Motor neuron (in vitro differentiated cells): ENCODE measurements at regions of chr11 and their contacts with region 1.

Region 1: DNA sequence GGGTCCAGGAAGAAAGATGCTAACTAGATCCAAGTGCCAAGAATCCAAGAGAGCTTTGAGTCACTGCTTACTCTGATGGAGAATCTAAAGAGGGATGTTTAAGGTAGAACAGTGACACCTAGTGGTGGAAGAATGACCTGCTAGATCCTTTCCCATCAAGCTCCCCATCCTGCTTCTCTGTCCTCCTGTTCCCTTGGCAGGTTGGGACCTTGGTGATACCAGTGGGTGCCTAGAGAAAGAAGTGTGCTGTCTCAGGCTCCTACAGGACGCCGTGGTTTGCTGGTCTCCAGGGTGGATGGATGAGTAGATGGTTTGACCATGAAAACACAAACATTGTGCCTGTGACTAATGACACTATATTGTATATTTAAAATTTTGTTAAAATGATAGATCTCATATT is 383.7 kb downstream of the TMEM135 start:
- ATAC-seq: peak in 4 of 8 experiments; percentile 73 to 97 (median 94)
- H3K4me3 ChIP-seq: no peak overlapping the region
- H3K27ac ChIP-seq: no peak overlapping the region
- H3K4me1 ChIP-seq: no peaks in the 10 kb centered on the region

Region 2: DNA sequence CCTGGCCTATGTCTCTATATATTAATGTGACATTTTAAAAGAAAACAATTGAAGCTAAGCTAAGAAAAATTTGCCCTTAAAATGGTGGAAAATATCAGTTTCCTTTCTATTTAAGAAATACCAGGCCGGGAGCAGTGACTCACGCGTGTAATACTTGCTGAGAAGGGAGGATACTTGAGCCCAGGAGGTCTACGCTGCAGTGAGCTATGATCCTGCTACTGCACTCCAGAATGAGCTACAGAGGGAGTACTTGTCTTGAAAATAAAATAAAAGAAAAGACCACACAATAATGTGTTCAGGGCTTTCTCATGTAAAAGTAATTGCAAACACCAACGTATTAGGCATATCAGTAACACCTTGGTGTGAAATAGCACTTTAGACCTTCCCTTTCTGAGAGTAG is 622.4 kb before region 1 on chr11:
- in situ Hi-C with region 1: no loop called
- ATAC-seq: peak in 1 of 8 experiments; percentile 14
- H3K4me3 ChIP-seq: no peak overlapping the region
- H3K27ac ChIP-seq: no peak overlapping the region
- H3K4me1 ChIP-seq: peaks cover 23 to 31% of the 10 kb centered on the region in 2 donors

Region 3: GRCh38 chr11:86938900-86939880 is 482.2 kb before region 1 on chr11:
- in situ Hi-C with region 1: loop called in 1 of 9 experiments (anchors 25 kb)
- ATAC-seq: peak in 7 of 8 experiments; percentile 11 to 49 (median 46)
- H3K4me3 ChIP-seq: no peak overlapping the region
- H3K27ac ChIP-seq: no peak overlapping the region
- H3K4me1 ChIP-seq: peaks cover 3 to 20% of the 10 kb centered on the region in 2 donors

Region 4: DNA sequence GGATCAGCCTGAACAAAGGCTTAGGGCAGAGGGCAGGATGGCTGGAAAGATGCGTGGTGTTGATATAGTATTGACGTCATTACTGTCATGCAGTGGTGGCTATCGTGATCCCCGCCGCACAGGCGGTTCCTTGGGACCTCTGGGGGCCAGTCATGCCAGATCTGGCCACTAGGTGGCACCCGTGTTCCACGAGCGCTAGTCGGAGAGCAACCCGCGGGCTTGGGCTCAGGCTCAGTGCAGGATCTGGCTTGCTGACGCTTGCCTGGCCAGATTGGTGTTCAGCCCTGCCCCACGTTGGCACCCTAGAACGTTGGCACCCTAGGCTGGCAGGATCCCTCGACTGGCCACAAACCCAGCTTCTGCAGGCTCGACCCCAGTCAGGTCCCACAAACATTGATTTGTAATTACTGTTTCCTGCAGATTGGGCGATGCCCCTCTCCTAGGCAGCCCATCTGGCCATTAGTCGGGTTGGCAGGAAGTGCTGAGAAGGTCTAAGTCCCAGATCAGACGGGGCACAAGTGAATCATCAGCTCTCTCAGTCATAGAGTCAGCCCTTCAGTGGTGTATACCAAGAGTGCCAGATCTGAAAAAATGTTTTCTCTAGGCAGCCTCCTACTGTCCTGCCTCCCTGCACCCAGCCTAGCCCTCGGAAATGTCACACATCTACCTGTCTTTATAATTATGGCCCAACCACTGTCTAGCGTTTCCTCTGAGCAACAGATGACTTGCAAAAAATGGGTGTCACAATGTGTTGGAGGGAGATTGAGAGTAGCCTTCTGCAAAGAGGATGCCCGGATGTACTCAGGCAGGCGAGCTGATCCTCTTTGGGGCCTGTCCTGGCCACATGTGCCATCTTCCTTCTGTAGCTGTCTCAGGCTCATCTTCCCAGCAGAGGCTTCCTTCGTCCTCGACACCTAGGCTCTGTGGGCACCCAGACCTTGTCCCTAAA is 68.4 kb before region 1 on chr11:
- in situ Hi-C with region 1: loop called in 1 of 9 experiments (anchors 5 kb)
- ATAC-seq: peak; percentile 94 to 99 (median 98)
- H3K4me3 ChIP-seq: no peak overlapping the region
- H3K27ac ChIP-seq: no peak overlapping the region
- H3K4me1 ChIP-seq: no peaks in the 10 kb centered on the region